Gastrocnemius medialis (tissue), 4 donors: ENCODE measurements at regions of chr19 and their contacts with region 1.

Region 1: DNA sequence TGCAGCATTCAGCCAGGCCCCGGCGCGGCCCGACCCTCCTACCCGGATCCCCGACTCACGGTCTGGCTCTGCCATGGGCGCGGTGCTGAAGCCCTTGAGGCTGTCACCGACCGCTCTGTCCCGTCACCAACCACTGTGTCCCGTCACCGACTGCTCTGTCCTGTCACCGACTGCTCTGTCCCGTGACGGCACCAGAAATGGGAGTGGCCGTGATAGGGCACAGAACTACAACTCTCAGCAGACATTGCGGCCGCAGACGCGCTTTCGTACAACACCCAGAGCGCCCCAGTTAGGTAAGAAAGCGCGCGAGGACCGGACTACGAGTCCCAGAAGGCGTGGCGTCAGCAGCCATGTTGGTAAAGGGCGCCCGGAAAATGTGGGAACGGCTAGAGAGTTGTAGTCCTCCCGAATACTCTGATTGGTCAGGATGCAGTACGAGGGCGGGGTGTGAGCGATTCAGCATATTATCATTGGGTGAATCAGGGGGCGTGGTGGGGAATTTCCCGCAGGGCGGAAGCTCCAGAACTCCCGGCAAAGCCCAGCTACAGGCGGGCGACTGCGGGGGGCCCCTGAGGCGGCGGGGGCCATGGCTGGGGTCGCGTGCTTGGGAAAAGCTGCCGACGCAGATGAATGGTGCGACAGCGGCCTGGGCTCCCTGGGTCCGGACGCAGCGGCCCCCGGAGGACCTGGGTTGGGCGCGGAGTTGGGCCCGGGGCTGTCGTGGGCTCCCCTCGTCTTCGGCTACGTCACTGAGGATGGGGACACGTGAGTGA is at the starts of genes NFKBIB and SIRT2:
- DNase-seq: peak; percentile 100
- ATAC-seq: peak; percentile 97 to 98
- H3K4me3 ChIP-seq: peak within 1 kb of the TSS; percentile 74 to 98 (median 90)
- H3K27ac ChIP-seq: peak within 1 kb of the TSS; percentile 90 to 99 (median 96)
- H3K4me1 ChIP-seq: peaks cover 45 to 50% of the 10 kb centered on the region in 2 donors
- H3K27me3 ChIP-seq: no peaks in the 10 kb centered on the region
- CTCF ChIP-seq: no peak
- POLR2A ChIP-seq: peak; percentile 94 to 98
- total RNA-seq, gene NFKBIB: 32.2 to 63.8 (median 53.6) TPM
- total RNA-seq, gene SIRT2: 208 to 327 (median 285) TPM

Region 2: DNA sequence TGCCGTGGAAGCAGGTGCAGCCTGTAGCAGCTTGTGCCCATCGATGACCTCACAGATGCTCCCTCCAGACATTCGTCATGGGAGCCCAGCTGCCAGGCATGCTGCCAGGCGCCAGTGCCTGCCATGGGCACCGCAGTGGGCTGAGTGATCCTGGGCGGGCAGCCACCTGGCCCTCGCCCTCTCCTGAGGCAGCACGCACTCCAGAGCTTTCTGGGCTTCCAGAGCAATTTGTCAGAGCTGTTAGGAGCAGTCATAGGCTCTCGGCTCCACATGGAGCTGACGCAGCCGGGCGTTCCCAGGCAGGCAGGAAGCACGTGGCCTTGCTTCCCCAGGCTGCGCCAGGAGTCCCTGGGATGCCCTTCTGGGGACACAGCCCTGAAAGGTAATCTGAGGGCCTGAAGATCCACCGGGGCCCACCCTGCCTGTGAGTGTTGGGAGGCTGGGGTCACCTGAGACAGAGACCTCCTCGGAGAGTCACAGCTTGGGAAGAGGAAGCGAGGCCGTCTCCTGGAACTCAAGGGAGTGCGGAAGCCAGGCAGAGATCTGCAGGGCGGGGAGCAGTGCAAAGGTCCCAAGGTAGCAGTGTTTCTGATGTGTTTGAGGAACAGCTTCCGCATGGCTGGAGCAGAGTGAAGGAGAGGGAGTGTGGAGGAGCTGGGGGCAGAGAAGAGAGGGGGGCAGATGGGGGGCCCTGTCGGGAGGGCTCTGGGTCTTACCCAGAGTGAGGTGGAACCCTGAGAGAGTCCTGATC is 726.2 kb before region 1 on chr19:
- in situ Hi-C with region 1: no loop called
- intact Hi-C with region 1: loop called (anchors 10 kb)
- DNase-seq: peak; percentile 88 to 98
- ATAC-seq: peak; percentile 92 to 95
- H3K4me3 ChIP-seq: peak overlapping the region; percentile 20 to 46 (median 39)
- H3K27ac ChIP-seq: peak overlapping the region; percentile 90 to 96 (median 93)
- H3K4me1 ChIP-seq: peaks cover 18 to 19% of the 10 kb centered on the region in 2 donors
- H3K27me3 ChIP-seq: no peaks in the 10 kb centered on the region
- CTCF ChIP-seq: no peak
- POLR2A ChIP-seq: peak; percentile 48 to 65

Region 3: DNA sequence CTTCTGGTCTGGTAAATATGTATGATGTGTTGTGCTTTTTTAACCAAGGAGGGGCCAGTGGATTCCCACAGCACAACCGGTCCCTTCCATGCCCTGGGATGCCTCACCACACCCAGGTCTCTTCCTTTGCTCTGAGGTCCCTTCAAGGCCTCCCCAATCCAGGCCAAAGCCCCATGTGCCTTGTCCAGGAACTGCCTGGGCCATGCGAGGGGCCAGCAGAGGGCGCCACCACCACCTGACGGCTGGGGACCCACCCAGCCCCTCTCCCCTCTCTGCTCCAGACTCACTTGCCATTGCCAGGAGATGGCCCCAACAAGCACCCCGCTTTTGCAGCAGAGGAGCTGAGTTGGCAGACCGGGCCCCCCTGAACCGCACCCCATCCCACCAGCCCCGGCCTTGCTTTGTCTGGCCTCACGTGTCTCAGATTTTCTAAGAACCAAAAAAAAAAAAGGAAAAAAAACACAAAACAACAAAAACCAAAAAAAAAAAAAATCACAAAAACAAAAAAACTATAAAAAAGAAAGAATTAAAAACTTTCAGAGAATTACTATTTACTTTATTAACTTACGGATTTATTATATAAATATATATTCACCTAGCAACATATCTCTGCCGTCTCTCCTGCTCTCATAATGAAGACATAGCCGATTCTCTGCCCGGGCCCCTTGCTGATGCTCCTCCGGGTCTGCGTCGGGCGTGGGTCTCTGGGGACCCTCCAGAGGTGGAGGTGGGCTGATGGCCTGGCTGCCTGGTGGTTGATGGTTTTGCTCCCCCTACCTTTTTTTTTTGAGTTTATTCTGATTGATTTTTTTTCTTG is 169.8 kb before region 1 on chr19:
- in situ Hi-C with region 1: loop called in 2 of 4 experiments (anchors 25 kb)
- intact Hi-C with region 1: no loop called
- DNase-seq: peak in 1 of 2 donors; percentile 58
- ATAC-seq: peak in 1 of 2 donors; percentile 45
- H3K4me3 ChIP-seq: no peak overlapping the region
- H3K27ac ChIP-seq: peak overlapping the region; percentile 25 to 54 (median 40)
- H3K4me1 ChIP-seq: peaks cover 7 to 8% of the 10 kb centered on the region in 2 donors
- H3K27me3 ChIP-seq: no peaks in the 10 kb centered on the region
- CTCF ChIP-seq: peak; percentile 71 to 89 (median 76)
- POLR2A ChIP-seq: no peak

Region 4: DNA sequence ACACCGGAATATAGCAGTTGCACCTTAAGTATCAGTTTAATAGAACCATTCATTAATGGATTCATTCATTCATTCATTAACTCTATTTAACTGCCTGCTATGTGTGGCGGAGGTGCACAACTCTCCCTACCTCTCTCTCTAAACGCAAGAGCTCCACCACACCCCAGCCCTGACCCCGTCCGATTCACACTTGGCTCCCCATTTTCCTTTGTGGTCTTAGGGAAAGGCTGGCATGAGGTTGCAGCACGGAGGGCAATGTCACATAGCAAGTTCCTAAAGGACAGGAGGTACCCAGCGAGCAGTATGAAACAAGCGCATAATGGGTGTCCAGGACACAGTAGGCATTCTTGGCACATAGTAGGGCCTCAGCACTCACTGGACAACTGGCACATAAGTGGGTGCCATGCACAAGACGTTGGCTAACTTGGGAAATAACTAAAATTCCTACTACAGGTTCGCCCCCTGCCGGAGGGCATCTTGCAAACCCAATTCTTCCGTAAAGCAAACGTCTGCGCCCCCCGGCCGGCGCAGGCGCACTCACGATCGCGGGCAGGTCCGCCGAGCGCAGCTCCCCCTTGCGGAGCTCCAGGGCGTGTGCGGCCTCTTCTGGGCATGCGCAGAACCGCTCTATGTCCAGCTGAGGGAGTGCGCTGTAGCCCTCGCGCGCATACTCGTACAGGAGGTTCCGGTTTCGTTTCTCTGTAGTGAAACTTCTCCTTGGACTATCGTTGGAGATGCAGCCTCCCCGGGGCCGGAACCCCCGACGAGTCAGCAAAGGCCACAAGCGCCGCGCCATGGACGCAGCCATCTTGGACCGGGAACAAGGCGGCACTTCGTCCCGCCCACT is 30.5 kb after region 1 on chr19 and contains the start of gene SARS2:
- in situ Hi-C with region 1: no loop called
- intact Hi-C with region 1: loop called (anchors 1 kb)
- DNase-seq: peak; percentile 84 to 86
- ATAC-seq: peak; percentile 87 to 91
- H3K4me3 ChIP-seq: peak within 1 kb of the TSS; percentile 64 to 86 (median 76)
- H3K27ac ChIP-seq: peak within 1 kb of the TSS; percentile 81 to 94 (median 88)
- H3K4me1 ChIP-seq: peaks cover 14 to 17% of the 10 kb centered on the region in 2 donors
- H3K27me3 ChIP-seq: no peaks in the 10 kb centered on the region
- CTCF ChIP-seq: peak; percentile 97 to 100 (median 98)
- POLR2A ChIP-seq: no peak
- total RNA-seq, gene SARS2: 12.1 to 30.0 (median 27.8) TPM

Region 5: GRCh38 chr19:39031368-39032062 is 131.9 kb after region 1 on chr19:
- in situ Hi-C with region 1: no loop called
- intact Hi-C with region 1: no loop called
- DNase-seq: peak; percentile 27 to 56
- ATAC-seq: peak; percentile 61 to 73
- H3K4me3 ChIP-seq: peak overlapping the region; percentile 52 to 60 (median 56)
- H3K27ac ChIP-seq: peak overlapping the region in 2 of 4 donors; percentile 49 to 68
- H3K4me1 ChIP-seq: peaks cover 0 to 15% of the 10 kb centered on the region in 2 donors
- H3K27me3 ChIP-seq: peaks cover 8 to 24% (median 21%) of the 10 kb centered on the region in 3 donors
- CTCF ChIP-seq: no peak
- POLR2A ChIP-seq: no peak